Dendritic cell treated with granulocyte-macrophage colony-stimulating factor and Interleukin-4, amounts not matched to agents 40 ng/mL and 50 ng/mL, for 4 days (primary cell): ENCODE measurements at regions of chr19 and their contacts with region 1.

Region 1: GRCh38 chr19:37594304-37594981 is at the starts of genes ZNF540 and ZNF571:
- H3K4me3 Mint-ChIP-seq: peak within 1 kb of the TSS; percentile 95
- H3K27ac Mint-ChIP-seq: peak within 1 kb of the TSS; percentile 82
- H3K4me1 Mint-ChIP-seq: peaks cover 19% of the 10 kb centered on the region
- H3K27me3 Mint-ChIP-seq: peaks cover 6% of the 10 kb centered on the region

Region 2: DNA sequence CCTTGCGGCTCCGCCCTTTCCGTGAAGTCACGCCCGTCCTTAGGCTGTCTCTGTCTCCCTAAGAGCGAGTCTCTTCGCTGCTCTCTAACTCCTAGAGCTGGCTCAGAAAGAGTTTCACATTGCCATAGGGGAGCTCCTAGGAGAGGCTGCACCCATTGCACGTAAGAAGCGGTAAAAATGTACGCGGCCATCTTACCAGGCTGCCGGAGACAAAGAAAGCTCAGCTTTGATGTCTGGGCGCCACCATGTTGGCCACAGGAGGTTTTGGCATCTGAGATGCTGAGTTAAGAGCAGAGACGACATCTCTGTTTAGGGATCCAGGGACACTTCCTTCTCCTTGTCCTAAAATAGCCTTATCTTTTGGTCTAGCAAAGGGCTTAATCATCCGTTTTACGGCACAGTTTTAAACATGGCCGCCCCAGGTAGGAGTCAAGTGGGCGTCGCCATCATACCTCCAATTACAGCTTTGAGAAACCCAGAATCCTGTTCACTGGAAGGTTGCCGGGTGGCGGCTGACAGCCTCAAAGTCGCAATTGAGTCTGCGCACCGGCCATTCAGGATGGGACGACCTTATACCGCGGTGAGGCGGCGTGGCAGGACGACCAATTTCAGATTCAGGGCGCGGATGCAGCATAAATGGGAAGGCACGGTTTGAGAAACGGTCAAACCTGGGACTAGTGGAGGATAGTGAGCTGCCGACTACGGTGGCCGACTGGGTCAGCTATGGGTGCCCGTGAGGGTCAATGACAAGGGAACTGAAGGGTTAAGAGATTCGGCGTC is 87.9 kb before region 1 on chr19 and contains the start of gene ZNF793:
- intact Hi-C with region 1: no loop called
- H3K4me3 Mint-ChIP-seq: no peak within 1 kb of the TSS
- H3K27ac Mint-ChIP-seq: no peak within 1 kb of the TSS
- H3K4me1 Mint-ChIP-seq: no peaks in the 10 kb centered on the region
- H3K27me3 Mint-ChIP-seq: no peaks in the 10 kb centered on the region

Region 3: DNA sequence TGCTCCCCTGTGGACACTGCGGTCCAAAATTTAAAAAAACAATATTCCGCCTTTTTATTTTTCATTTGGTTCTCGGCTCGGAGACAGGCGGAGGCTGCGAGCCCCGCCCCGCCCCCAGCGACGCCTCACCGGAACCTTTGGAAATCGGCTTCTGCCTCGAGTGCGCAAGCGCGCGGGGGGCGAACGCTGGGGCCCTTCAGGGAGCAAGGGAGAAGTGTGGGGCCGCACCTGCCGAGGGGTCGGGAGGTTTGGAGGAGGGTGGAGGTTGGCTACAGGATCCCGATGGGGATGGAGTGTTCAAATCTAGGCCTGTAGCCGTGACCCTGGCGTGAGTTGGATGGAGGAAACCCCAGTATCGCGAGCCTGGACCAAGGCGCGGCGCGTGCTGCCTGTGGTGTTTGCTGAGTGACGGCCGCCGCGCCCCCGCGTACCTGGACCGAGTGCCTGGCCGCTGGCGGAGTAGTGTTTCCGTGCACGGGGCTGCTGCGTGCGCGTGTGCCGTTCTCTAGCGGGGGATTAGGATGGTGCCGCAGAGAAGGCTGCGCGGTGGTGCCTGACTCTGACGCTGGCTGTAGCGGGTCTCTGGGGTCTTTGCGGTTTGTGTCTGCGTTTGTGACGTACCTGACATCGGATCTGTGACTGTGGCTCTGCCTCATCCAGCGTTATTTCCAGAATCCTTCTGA is 61.4 kb after region 1 on chr19:
- intact Hi-C with region 1: loop called (anchors 10 kb)
- H3K4me3 Mint-ChIP-seq: peak overlapping the region; percentile 90
- H3K27ac Mint-ChIP-seq: peak overlapping the region; percentile 85
- H3K4me1 Mint-ChIP-seq: peaks cover 22% of the 10 kb centered on the region
- H3K27me3 Mint-ChIP-seq: peaks cover 5% of the 10 kb centered on the region